ENCODE measurements at regions of chr7 and their contacts with region 1.

Region 1: GRCh38 chr7:151123822-151124464 is 37.7 kb downstream of the AGAP3 start:
- DNase-seq: peak; percentile 96
- CTCF ChIP-seq: peak; percentile 100

Region 2: GRCh38 chr7:150838970-150839650 is 284.8 kb before region 1 on chr7:
- CTCF ChIA-PET with region 1: no interaction called
- POLR2A ChIA-PET with region 1: no interaction called
- DNase-seq: no peak
- CTCF ChIP-seq: no peak

Region 3: DNA sequence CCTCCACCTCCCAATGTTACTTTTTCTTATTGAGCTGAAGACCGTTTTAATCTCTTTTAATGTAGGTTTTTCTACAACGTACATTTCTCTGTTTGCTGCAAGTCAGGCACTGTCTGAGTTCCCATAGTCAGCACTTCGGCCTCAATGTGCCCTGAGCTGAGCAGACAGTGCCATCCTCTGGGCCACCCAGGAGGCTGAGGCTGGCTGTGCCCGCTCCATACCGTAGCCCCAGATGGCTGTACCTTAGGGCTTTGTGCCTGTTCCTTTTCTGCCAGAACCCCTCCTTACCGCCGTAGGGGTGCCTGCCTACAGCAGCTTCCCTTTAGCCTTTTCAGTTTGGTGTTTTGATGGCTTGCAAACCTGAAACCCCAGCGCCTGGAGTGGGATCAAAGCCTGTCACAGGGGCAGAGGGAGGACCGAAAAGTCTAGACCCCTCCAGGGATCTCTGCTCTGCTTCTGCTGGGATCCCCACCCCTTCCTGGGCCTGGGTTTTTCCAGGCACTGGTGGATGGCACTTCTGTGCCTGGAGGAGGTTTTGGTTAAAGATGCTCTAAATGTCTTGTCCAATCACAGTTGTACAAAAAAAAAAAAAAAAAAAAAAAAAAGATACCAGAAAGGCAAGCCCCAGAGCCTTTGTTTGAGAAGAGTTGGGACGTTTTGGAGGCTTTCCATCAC is 28.7 kb before region 1 on chr7:
- CTCF ChIA-PET with region 1: interaction called, 10 read pairs
- POLR2A ChIA-PET with region 1: no interaction called
- DNase-seq: no peak
- CTCF ChIP-seq: no peak

Region 4: DNA sequence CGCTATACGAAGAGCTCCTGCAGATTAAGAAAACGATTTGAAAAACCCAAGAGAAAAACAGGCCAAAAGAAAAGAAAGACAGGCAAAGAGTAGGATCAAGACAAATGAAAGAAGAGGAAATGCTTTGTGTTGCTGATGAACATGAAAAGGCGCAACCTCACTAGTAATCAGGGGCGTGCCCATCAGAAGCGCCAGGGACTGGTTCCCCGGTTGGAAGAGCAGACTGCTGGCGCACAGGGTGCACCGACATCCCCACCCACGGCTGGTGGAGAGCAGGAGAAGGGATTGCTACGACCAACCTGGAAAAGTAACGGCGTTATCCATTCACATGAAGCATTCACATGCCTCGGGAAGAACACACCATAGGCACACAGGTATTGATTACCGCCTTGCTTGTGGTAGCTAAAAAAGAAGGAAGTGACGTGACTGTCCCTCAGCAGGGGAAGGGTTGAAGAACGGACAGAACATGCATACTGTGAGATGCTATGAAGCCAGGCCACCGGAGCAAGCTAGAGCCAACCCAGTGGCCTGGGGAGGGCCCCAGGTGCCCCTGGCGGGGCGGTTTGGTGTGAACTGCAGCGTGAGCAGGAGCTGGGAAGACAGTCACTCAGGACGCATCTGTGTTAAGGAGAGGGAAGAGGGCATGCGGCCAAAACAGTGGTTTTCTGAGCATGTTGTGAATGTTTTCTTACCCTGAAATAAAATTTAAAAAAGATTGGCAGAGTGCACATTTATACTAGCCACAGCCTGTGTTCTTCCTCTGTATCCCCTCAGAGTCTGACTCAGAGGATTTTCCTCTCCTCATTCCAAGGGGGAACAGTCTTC is 19.3 kb before region 1 on chr7:
- CTCF ChIA-PET with region 1: interaction called, 24 read pairs
- POLR2A ChIA-PET with region 1: no interaction called
- DNase-seq: no peak
- CTCF ChIP-seq: no peak

Region 5: DNA sequence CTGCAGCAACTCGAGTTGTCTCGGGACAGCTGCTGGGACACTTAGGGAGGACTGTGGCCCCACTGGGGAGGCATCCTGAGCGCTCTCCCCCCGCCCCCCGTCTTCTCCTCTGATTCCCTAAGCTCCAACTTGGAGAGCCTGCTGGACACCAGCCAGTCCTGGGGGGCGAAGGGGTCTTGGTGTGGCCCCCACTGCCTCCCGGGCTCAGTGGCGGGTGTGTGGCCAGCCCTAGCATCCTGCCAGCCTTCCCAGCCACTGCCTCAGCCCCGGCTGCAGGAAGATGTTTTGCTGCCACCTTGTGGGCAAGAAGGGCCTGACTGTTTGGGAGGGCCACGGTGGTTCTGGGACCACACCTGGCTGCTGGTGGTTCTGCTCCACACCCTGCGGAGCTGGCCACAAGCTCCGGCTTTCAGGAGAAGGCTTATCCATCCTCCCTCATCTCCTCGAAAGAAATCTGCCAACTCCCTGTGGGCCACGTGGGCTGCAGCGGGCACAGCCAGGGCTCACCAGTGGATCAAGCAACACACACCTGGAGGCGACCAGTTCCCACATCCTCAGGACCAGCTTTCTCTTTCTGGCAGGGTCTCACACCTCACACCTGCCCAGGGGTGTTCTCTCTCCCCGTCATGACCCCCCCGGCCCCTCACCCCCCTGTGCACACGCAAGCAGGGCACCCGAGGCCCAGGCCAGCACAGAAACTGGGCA is 12.8 kb before region 1 on chr7:
- CTCF ChIA-PET with region 1: interaction called, 49 read pairs
- POLR2A ChIA-PET with region 1: no interaction called
- DNase-seq: peak; percentile 92
- CTCF ChIP-seq: peak; percentile 94

Region 6: GRCh38 chr7:151137076-151137675 is 13.2 kb after region 1 on chr7:
- CTCF ChIA-PET with region 1: interaction called, 19 read pairs
- POLR2A ChIA-PET with region 1: no interaction called
- DNase-seq: no peak
- CTCF ChIP-seq: no peak

Region 7: DNA sequence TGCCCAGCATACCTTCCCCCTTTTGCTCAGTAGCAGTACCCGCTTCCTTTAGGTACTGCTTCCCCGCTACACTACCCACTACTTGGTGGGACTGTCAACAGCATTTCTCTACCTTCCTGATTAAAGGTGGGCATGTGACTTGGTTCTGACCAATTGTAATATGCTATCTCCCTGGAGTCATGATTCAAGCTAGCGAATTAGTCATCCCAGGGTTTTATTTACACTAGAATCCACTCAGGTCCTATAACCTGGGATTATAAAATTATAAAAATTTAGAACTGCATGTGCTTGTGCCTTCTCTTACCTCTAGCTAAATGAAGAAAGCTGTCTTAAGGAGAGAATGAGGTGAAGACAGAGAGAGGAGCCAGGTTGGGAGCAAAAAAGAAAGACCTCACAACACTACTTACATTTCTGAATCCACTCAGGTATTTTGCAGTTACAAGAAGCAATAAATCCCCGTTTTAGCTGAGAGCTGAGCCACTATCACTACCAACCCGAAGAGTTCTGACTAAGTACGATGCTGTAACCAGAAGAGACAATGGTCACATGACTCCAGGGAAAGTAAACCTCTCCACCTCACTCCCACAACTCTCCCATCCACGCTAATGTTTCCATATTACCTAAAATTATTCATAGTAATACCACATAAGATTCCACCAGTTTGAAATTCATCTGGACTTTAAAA is 33.8 kb after region 1 on chr7:
- CTCF ChIA-PET with region 1: interaction called, 11 read pairs
- POLR2A ChIA-PET with region 1: no interaction called
- DNase-seq: no peak
- CTCF ChIP-seq: no peak

Region 8: DNA sequence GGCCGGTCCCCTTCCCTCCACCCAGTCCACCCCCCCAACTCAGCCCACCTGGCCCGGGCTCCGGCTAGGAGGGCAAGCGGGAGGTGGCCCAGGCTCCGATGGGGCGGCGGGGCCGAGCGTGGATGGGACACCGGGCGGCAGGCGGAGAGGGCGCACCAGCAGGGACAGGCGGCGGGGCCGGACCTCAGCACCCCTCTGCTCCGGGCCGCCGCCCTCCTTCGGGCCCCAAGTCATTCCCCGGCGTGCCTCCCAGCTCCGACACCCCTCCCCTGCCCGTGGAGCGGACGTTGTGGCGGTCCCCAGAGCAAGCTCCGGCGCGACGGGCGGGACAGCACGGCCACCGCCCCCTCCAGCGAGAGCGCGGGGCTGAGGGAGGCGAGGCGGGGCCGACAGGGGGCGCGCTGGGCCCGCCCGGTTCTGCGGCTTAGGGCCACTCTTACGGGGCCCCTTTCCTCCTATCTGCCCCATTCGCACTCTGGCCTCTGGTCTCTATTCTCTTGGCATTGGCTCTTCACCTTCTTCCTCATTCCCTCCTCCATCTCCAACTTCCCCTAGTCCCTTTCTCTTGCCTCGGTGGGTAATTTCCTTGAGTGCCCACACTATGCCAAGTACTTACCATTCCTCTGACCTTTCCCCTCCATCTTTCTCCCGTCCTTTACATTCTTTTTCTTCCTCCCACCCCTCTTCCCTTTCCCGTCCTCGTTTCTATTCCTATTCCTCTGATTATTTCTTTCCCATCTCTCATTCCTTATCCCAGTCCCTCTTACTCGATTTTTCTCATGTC is 44.3 kb after region 1 on chr7:
- CTCF ChIA-PET with region 1: interaction called, 19 read pairs
- POLR2A ChIA-PET with region 1: no interaction called
- DNase-seq: peak; percentile 79
- CTCF ChIP-seq: peak; percentile 75